ENCODE measurements at regions of chr9 and their contacts with region 1.

Region 1: DNA sequence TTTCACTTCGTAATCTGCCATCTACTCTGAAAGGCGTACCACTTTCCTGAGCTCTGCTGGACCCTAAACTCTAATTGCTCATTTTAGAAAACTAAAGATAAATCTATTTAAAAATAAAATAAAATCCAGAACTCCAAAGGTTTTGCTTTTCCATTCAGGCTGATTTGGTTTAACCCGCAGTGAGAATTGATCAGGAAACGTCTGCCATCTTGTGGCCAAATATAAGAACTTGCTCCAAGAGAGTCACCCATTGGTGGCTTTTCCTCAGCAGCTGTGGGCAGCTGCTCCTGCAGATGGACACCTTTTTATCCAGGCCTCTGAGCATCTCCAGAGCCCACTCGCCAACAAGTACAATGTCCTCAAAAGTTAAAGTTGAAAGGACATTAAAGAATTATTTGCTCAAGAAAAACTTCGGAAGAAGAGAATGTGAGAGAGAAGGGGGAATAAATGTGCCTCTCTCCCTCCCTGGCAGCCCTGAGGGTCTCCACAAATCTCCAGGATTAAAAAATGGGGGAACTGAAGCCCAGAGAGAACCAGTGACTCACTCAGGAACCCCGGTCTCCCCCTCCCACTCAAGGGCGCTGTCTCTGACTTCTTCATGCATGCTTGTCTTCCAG is 4.1 kb downstream of the SAXO1 start:
- DNase-seq: peak; percentile 75
- ATAC-seq: peak; percentile 95
- H3K4me3 ChIP-seq: no peak overlapping the region
- H3K27ac ChIP-seq: no peak overlapping the region
- H3K4me1 ChIP-seq: no peaks in the 10 kb centered on the region
- H3K27me3 ChIP-seq: no peaks in the 10 kb centered on the region; the same call in 1 of the 2 replicates
- CTCF ChIP-seq: peak; percentile 83
- POLR2A ChIP-seq: no peak
- RAD21 ChIP-seq: peak; percentile 86

Region 2: DNA sequence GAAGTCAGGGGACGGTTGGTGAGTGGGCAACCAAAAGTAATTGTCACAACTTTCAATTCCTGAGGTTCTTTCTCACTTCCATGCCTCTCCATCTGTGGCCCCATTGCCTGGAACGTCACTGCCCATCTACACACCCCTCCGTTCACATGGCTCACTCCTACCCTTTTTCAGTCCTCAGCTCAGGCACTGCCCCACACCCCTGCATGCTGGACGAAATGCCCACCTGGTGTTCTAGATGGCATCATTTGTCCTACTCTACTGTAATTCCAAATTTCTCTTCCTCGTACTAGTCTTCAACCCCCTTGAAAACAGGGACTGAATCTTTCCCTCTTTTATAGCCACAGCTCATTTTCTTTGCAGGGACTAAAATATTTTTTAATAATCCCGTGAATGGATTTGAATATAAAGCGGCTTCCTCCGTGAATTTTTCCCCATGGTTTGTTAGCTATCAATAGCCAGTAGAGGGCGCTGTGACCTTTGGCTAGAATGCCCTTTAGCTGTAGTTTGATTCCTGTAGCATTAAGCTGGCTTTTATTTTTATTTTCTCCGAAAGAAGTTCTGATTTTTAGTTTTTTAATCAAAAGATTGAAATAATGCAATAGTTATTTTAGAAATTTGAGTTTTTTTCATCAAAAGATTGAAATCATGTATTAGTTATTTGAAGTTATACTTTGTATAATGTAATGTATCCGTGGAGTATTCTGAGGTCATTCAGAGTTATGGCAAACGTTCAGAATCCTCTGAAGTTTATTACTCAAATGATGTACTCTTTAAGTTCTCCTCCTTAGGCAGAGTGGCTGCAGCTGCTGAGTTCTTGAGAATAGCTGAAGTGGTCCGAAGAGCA is 1218.0 kb before region 1 on chr9:
- CTCF ChIA-PET with region 1: interaction called, 4 read pairs
- POLR2A ChIA-PET with region 1: no interaction called
- dilution Hi-C with region 1: no loop called
- in situ Hi-C with region 1: loop called (anchors 5 kb)
- intact Hi-C with region 1: loop called (anchors 2 kb)
- DNase-seq: peak; percentile 66
- ATAC-seq: peak; percentile 87
- H3K4me3 ChIP-seq: no peak overlapping the region
- H3K27ac ChIP-seq: no peak overlapping the region
- H3K4me1 ChIP-seq: no peaks in the 10 kb centered on the region
- H3K27me3 ChIP-seq: peaks cover 3% of the 10 kb centered on the region
- CTCF ChIP-seq: peak; percentile 91
- POLR2A ChIP-seq: no peak
- RAD21 ChIP-seq: peak; percentile 91

Region 3: GRCh38 chr9:18490635-18491370 is 538.1 kb before region 1 on chr9:
- CTCF ChIA-PET with region 1: no interaction called
- POLR2A ChIA-PET with region 1: no interaction called
- dilution Hi-C with region 1: no loop called
- in situ Hi-C with region 1: no loop called
- intact Hi-C with region 1: loop called (anchors 5 kb)
- DNase-seq: peak; percentile 99
- ATAC-seq: peak; percentile 78
- H3K4me3 ChIP-seq: peak overlapping the region; percentile 13
- H3K27ac ChIP-seq: peak overlapping the region; percentile 77
- H3K4me1 ChIP-seq: peaks cover 5% of the 10 kb centered on the region
- H3K27me3 ChIP-seq: no peaks in the 10 kb centered on the region
- CTCF ChIP-seq: no peak
- POLR2A ChIP-seq: peak; percentile 77
- RAD21 ChIP-seq: peak; percentile 35

Measured in IMR-90 (cell line).